Ascending aorta (tissue), 2 donors: ENCODE measurements at regions of chr2 and their contacts with region 1.

Region 1: GRCh38 chr2:237886685-237887481 is 27.5 kb downstream of the RAMP1 start:
- DNase-seq: peak in 1 of 2 donors; percentile 94
- H3K4me3 ChIP-seq: no peak overlapping the region
- H3K27ac ChIP-seq: peak overlapping the region; percentile 96 to 99
- H3K4me1 ChIP-seq: peaks cover 11 to 49% of the 10 kb centered on the region in 2 donors
- H3K27me3 ChIP-seq: no peaks in the 10 kb centered on the region
- CTCF ChIP-seq: no peak

Region 2: GRCh38 chr2:237864940-237865622 is 21.8 kb before region 1 on chr2:
- intact Hi-C with region 1: loop called (anchors 1 kb)
- DNase-seq: peak in 1 of 2 donors; percentile 83
- H3K4me3 ChIP-seq: peak overlapping the region in 1 of 2 donors; percentile 26
- H3K27ac ChIP-seq: peak overlapping the region; percentile 97 to 98
- H3K4me1 ChIP-seq: peaks cover 10 to 69% of the 10 kb centered on the region in 2 donors
- H3K27me3 ChIP-seq: no peaks in the 10 kb centered on the region
- CTCF ChIP-seq: no peak